ENCODE measurements at regions of chr20 and their contacts with region 1.

Region 1: GRCh38 chr20:32325706-32326503 is 32.2 kb upstream of the ASXL1 start:
- DNase-seq: peak; percentile 79 to 85
- H3K4me3 ChIP-seq: no peak overlapping the region
- H3K4me3 Mint-ChIP-seq: peak overlapping the region; percentile 41
- H3K27ac Mint-ChIP-seq: peak overlapping the region; percentile 78
- H3K4me1 ChIP-seq: peaks cover 45% of the 10 kb centered on the region
- H3K4me1 Mint-ChIP-seq: peaks cover 21% of the 10 kb centered on the region
- H3K27me3 ChIP-seq: no peaks in the 10 kb centered on the region
- H3K27me3 Mint-ChIP-seq: no peaks in the 10 kb centered on the region
- CTCF ChIP-seq: no peak

Region 2: GRCh38 chr20:32164984-32165735 is 160.7 kb before region 1 on chr20:
- CTCF ChIA-PET with region 1: no interaction called
- POLR2A ChIA-PET with region 1: no interaction called
- intact Hi-C with region 1: no loop called
- DNase-seq: no peak
- H3K4me3 ChIP-seq: no peak overlapping the region
- H3K4me3 Mint-ChIP-seq: no peak overlapping the region
- H3K27ac Mint-ChIP-seq: no peak overlapping the region
- H3K4me1 ChIP-seq: 0 out of 2 replicates have a peak, but pooled peaks cover 5% of the 10 kb centered on the region
- H3K4me1 Mint-ChIP-seq: no peaks in the 10 kb centered on the region
- H3K27me3 ChIP-seq: no peaks in the 10 kb centered on the region
- H3K27me3 Mint-ChIP-seq: no peaks in the 10 kb centered on the region
- CTCF ChIP-seq: no peak

Region 3: DNA sequence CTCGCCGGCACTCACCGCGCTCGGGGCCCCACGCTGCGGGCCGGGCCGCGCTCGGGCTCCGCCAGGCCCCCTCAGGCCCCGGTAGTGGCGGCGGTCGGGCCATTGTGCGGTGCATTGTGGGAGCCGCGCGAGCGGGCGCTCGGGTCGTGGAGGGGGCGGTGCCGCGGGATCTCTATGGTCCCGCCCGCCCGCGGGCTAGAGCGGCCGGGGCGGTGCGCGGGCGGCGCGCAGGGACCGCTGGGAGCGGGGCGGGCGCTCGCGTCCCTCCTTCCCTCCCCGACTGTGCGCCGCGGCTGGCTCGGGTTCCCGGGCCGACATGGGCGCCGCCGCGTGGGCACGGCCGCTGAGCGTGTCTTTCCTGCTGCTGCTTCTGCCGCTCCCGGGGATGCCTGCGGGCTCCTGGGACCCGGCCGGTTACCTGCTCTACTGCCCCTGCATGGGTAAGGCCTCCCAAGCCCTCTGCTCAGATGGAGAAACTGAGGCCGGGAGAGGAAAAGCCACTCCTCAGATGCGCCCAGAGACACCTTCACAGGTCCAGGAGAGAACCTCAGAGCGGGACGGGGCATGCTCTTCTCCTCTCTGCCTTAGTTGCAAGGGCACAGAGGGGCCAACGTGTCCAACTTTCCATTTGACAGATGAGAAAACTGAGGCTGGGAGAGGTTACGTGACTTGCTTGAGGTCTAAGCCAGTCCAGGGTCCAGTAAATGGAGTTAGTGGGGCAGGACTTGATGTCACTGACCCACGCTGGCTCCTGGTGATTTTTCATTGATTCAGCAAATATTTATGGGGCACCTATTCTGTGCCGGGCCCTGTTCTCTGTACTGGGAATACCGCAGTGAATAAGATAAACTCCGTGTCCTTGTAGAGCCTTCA is 118.0 kb before region 1 on chr20 and contains the starts of genes PLAGL2 and POFUT1:
- CTCF ChIA-PET with region 1: no interaction called
- POLR2A ChIA-PET with region 1: no interaction called
- intact Hi-C with region 1: loop called (anchors 5 kb)
- DNase-seq: peak; percentile 95 to 100
- H3K4me3 ChIP-seq: peak within 1 kb of the TSS; percentile 72
- H3K4me3 Mint-ChIP-seq: peak within 1 kb of the TSS; percentile 92
- H3K27ac Mint-ChIP-seq: peak within 1 kb of the TSS; percentile 89
- H3K4me1 ChIP-seq: peaks cover 46% of the 10 kb centered on the region
- H3K4me1 Mint-ChIP-seq: peaks cover 71% of the 10 kb centered on the region
- H3K27me3 ChIP-seq: no peaks in the 10 kb centered on the region
- H3K27me3 Mint-ChIP-seq: no peaks in the 10 kb centered on the region
- CTCF ChIP-seq: peak; percentile 9 to 55
- total RNA-seq, gene PLAGL2: 89.6 and 96.1 TPM in 2 replicates
- total RNA-seq, gene POFUT1: 148 and 158 TPM in 2 replicates

Measured in Caco-2 (cell line).